ENCODE measurements at regions of chr3 and their contacts with region 1.

Region 1: GRCh38 chr3:170357176-170357919 is at the start of gene SKIL:
- DNase-seq: peak; percentile 96 to 99
- ATAC-seq: peak; percentile 65 to 84 (median 69)
- H3K4me3 ChIP-seq: peak within 1 kb of the TSS; percentile 83
- H3K4me3 Mint-ChIP-seq: peak within 1 kb of the TSS; percentile 95
- H3K27ac ChIP-seq: peak within 1 kb of the TSS; percentile 99
- H3K27ac Mint-ChIP-seq: peak within 1 kb of the TSS; percentile 95 to 100
- H3K4me1 ChIP-seq: peaks cover 18% of the 10 kb centered on the region
- H3K4me1 Mint-ChIP-seq: peaks cover 54% of the 10 kb centered on the region in 2 donors
- H3K27me3 ChIP-seq: no peaks in the 10 kb centered on the region
- H3K27me3 Mint-ChIP-seq: no peaks in the 10 kb centered on the region
- CTCF ChIP-seq: no peak
- total RNA-seq, gene SKIL: 85.5 to 156 (median 96.3) TPM

Region 2: DNA sequence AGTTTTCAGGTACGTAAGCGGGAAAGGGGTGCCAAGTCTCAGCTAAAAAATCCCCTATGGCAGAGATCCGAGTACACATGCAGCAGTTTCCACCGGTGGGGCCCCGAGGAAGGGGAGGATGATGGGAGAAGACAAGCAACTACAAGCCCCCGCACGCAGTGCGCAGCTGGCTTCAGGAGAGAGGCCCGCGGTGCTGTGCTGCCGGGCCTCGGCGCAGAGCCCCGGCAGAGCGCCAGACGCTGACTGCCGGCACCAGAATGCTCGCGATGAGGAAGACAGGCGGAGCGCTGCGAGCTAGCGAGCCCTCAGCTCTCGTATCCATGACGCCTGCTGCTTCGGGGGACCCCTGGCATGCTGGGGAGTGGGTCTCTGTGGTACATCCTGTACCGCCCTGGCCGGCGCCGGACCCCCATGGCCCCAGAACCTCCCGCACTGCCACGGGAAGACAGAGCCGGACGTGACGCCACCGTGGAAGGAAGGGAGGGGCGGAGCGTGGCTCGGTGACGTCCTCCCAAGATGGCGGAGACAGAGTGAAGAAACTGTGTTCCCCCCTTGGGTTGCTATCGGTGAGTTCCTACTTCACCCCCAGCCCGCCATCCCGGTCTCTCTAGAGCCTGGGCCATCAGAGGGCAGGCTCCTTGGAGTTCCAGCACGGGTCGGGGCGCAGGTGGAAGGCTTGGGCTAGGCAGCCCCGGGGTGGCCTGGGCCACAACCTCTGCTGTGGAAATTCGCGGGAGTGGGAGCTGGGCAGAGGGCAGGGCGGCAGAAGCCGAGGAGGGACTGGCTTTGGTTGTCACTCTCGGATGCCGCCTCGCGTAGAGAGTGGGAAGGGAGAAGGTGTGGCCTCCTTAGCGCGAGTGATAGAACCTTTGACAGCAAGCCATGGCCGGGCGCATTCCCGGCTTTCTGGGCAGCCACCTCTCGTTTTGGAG is 584.2 kb before region 1 on chr3 and contains the start of gene MYNN:
- intact Hi-C with region 1: loop called (anchors 2 kb)
- DNase-seq: peak; percentile 93 to 97
- ATAC-seq: peak; percentile 81 to 95 (median 87)
- H3K4me3 ChIP-seq: peak within 1 kb of the TSS; percentile 99
- H3K4me3 Mint-ChIP-seq: peak within 1 kb of the TSS; percentile 99
- H3K27ac ChIP-seq: peak within 1 kb of the TSS; percentile 100
- H3K27ac Mint-ChIP-seq: peak within 1 kb of the TSS; percentile 100
- H3K4me1 ChIP-seq: no peaks in the 10 kb centered on the region
- H3K4me1 Mint-ChIP-seq: peaks cover 51 to 53% of the 10 kb centered on the region in 2 donors
- H3K27me3 ChIP-seq: no peaks in the 10 kb centered on the region
- H3K27me3 Mint-ChIP-seq: no peaks in the 10 kb centered on the region
- CTCF ChIP-seq: no peak
- total RNA-seq, gene MYNN: 19.5 to 29.9 (median 29.2) TPM

Region 3: GRCh38 chr3:170180908-170181879 is 176.2 kb before region 1 on chr3 and contains the start of gene PHC3:
- intact Hi-C with region 1: loop called (anchors 2 kb)
- DNase-seq: peak; percentile 87 to 96
- ATAC-seq: peak; percentile 79 to 88 (median 83)
- H3K4me3 ChIP-seq: peak within 1 kb of the TSS; percentile 84
- H3K4me3 Mint-ChIP-seq: peak within 1 kb of the TSS; percentile 97
- H3K27ac ChIP-seq: peak within 1 kb of the TSS; percentile 97
- H3K27ac Mint-ChIP-seq: peak within 1 kb of the TSS; percentile 96 to 99
- H3K4me1 ChIP-seq: peaks cover 26% of the 10 kb centered on the region
- H3K4me1 Mint-ChIP-seq: peaks cover 30 to 35% of the 10 kb centered on the region in 2 donors
- H3K27me3 ChIP-seq: no peaks in the 10 kb centered on the region
- H3K27me3 Mint-ChIP-seq: no peaks in the 10 kb centered on the region
- CTCF ChIP-seq: no peak
- total RNA-seq, gene PHC3: 121 to 130 (median 125) TPM

Region 4: DNA sequence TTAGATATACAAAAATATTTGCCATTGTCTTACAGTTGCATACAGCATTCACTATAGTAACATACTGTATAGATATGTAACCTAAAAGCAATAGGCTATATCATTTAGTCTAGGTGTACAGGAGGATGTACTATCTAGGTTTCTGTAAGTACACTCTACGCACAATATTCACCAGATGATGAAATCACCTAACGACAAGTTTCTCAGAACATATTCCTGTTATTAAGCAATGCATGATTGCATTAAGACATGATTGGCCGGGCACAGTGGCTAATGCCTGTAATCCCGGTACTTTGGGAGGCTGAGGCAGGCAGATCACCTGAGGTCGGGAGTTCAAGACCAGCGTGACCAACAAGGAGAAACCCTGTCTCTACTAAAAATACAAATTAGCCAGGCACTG is 149.6 kb before region 1 on chr3:
- intact Hi-C with region 1: no loop called
- DNase-seq: no peak
- ATAC-seq: no peak
- H3K4me3 ChIP-seq: no peak overlapping the region
- H3K4me3 Mint-ChIP-seq: no peak overlapping the region
- H3K27ac ChIP-seq: no peak overlapping the region
- H3K27ac Mint-ChIP-seq: no peak overlapping the region
- H3K4me1 ChIP-seq: no peaks in the 10 kb centered on the region
- H3K4me1 Mint-ChIP-seq: no peaks in the 10 kb centered on the region
- H3K27me3 ChIP-seq: no peaks in the 10 kb centered on the region
- H3K27me3 Mint-ChIP-seq: peaks cover 29% of the 10 kb centered on the region in 2 donors
- CTCF ChIP-seq: no peak

Region 5: DNA sequence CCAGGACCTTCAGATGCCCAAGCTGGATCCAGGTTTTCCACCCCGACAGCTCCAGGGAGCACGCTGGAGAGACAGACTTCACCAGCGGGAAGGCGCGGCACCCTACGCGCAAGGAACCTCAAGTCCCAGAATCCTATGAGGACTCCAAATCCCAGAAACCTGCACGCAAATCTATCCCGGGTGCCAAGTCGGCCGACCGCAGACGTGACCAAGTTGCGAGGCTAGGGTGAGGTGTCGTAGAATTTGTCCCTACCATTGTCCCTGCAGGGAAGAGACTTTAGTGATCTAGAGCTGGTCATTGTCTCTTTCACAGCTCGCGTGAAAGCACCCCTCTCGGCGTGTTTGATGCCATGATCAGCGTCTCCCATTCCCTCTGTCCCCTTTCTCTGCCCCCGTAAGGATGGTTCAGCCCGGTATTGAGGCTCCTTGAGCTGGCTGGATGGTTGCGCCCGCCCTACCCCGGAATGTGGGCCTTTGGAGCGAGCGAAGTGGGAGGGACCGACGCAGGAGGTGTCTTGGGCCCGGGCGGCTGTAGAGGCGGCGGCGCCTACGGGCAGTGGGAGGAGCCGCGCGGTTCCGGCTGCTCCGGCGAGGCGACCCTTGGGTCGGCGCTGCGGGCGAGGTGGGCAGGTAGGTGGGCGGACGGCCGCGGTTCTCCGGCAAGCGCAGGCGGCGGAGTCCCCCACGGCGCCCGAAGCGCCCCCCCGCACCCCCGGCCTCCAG is 135.3 kb before region 1 on chr3 and contains the start of gene PRKCI:
- intact Hi-C with region 1: loop called (anchors 1 kb)
- DNase-seq: peak; percentile 65 to 93
- ATAC-seq: peak; percentile 91 to 95 (median 92)
- H3K4me3 ChIP-seq: peak within 1 kb of the TSS; percentile 57
- H3K4me3 Mint-ChIP-seq: peak within 1 kb of the TSS; percentile 94
- H3K27ac ChIP-seq: peak within 1 kb of the TSS; percentile 67
- H3K27ac Mint-ChIP-seq: peak within 1 kb of the TSS; percentile 74 to 89
- H3K4me1 ChIP-seq: peaks cover 13% of the 10 kb centered on the region
- H3K4me1 Mint-ChIP-seq: peaks cover 16 to 17% of the 10 kb centered on the region in 2 donors
- H3K27me3 ChIP-seq: no peaks in the 10 kb centered on the region
- H3K27me3 Mint-ChIP-seq: peaks cover 0 to 11% of the 10 kb centered on the region in 2 donors
- CTCF ChIP-seq: no peak
- total RNA-seq, gene PRKCI: 8.4 to 14.4 (median 11.1) TPM

Region 6: DNA sequence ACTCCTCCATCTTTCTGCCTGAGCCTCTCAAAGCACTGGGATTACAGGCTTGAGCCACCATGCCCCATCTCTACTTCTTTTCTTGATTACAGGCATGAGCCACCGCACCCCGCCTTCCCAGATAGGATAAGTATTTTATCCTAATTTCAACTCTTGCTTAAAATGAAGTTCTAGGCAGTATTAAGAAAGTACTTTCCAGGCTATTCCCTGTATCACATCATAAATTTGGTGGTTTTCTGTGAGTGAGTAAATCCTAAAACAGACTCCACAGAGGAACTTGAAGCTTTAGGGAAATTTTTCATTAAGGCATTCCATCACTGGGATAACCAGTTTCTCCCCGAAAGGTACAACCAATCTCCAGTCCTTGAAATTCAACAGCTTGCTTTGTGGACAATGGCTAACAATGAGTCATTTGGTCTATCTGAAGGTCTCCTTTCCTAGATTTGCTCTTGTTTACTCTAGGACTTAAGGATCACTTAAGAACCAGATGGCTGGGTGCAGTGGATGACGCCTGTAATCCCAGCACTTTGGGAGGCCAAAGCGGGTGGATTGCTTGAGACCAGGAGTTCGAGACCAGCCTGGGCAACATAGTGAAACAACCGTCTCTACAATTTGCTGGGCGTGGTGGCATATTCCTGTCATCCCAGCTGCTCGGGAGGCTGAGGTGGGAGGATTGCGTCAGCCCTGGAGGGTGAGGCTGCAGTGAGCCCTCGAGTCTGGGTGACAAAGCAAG is 49.5 kb before region 1 on chr3:
- intact Hi-C with region 1: loop called (anchors 2 kb)
- DNase-seq: no peak
- ATAC-seq: no peak
- H3K4me3 ChIP-seq: no peak overlapping the region
- H3K4me3 Mint-ChIP-seq: no peak overlapping the region
- H3K27ac ChIP-seq: no peak overlapping the region
- H3K27ac Mint-ChIP-seq: no peak overlapping the region
- H3K4me1 ChIP-seq: peaks cover 3% of the 10 kb centered on the region
- H3K4me1 Mint-ChIP-seq: no peaks in the 10 kb centered on the region
- H3K27me3 ChIP-seq: no peaks in the 10 kb centered on the region
- H3K27me3 Mint-ChIP-seq: no peaks in the 10 kb centered on the region
- CTCF ChIP-seq: no peak

Region 7: DNA sequence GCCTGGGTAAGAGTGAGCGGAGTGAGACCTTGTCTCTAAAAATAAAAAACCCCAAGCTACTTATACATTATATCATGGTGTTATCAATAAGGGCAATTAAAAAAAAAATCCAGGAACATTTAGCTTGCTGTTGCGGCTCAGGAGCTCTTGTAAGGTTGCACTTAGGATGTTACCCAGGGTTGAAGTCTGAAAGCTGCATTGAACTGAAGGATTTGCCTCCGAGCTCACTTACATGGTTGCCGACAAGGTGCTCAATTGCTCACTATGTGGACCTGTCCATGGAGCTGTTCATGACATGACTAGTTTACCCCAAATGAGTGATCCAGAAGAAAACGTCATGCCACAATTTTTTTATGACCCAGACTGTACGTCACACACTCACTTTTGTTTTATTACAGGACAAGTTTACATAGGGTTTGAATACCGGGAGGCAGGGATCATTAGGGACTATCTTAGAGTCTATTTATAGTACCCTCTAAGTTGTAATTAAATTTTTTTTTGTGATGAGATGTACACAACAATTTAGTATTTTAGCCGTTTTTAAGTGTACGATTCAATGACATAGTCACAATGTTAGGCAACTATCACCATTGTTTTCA is 40.3 kb after region 1 on chr3:
- intact Hi-C with region 1: no loop called
- DNase-seq: no peak
- ATAC-seq: no peak
- H3K4me3 ChIP-seq: no peak overlapping the region
- H3K4me3 Mint-ChIP-seq: no peak overlapping the region
- H3K27ac ChIP-seq: no peak overlapping the region
- H3K27ac Mint-ChIP-seq: no peak overlapping the region
- H3K4me1 ChIP-seq: no peaks in the 10 kb centered on the region
- H3K4me1 Mint-ChIP-seq: no peaks in the 10 kb centered on the region
- H3K27me3 ChIP-seq: no peaks in the 10 kb centered on the region
- H3K27me3 Mint-ChIP-seq: no peaks in the 10 kb centered on the region
- CTCF ChIP-seq: no peak

Region 8: DNA sequence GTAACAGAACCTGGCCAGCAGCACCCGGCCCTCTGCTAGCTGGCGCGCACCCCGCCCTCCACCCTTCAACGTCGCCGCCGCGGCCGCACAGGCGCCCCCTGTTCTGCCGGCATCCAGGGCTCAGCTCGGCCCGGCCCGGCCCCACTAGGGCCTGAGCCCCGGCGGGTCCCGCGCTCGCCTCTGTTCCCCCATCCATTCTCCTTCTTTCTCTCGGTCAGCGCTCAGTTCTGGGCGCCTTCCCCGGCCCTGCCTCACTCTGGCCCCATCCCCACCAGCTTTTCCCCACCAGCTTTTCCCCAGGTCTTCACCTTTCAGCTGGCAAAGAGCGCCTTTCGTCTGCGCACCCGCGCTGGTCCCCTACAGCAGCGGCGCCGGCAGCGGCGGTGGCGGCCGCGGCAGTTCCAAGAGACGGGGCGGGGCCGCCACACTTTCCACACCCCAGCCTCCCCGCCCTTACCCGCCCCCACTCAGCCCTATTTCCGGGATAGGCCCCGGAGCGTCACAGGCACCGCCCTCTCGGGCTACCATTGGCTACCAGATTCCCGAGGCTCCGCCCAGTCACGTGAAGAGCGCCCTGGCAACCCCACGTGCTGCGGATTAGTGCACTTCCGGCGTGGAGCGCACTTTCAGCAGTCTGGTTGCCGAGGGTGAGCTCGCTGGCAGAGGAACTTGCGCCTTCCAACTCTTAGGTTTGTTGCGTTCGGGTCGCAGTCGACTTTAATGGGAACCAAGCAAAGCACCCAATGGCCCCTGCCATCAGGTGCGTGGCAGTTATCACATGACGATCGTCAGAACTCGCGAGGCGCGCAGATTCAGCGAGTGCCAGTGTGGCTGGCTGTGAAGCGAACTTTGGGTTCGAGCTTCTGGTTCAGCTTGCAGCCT is 551.1 kb after region 1 on chr3 and contains the start of gene EIF5A2:
- intact Hi-C with region 1: loop called (anchors 5 kb)
- DNase-seq: peak; percentile 91 to 98
- ATAC-seq: peak; percentile 92 to 98 (median 94)
- H3K4me3 ChIP-seq: peak within 1 kb of the TSS; percentile 71
- H3K4me3 Mint-ChIP-seq: peak within 1 kb of the TSS; percentile 98
- H3K27ac ChIP-seq: peak within 1 kb of the TSS; percentile 80
- H3K27ac Mint-ChIP-seq: peak within 1 kb of the TSS; percentile 87 to 89
- H3K4me1 ChIP-seq: peaks cover 14% of the 10 kb centered on the region
- H3K4me1 Mint-ChIP-seq: peaks cover 23 to 29% of the 10 kb centered on the region in 2 donors
- H3K27me3 ChIP-seq: no peaks in the 10 kb centered on the region
- H3K27me3 Mint-ChIP-seq: no peaks in the 10 kb centered on the region
- CTCF ChIP-seq: no peak
- total RNA-seq, gene EIF5A2: 12.9 to 34.8 (median 22.8) TPM